Heart right ventricle (tissue), 16 donors: ENCODE measurements at regions of chr5 and their contacts with region 1.

Region 1: GRCh38 chr5:135977375-135977928 is 22.7 kb upstream of the LECT2 start:
- DNase-seq: peak; percentile 56 to 79
- ATAC-seq: peak; percentile 70 to 89 (median 79)
- H3K4me3 ChIP-seq: no peak overlapping the region
- H3K27ac ChIP-seq: peak overlapping the region in 4 of 10 donors; percentile 36 to 77 (median 56)
- H3K4me1 ChIP-seq: peaks cover 0 to 45% (median 30%) of the 10 kb centered on the region in 9 donors
- H3K27me3 ChIP-seq: peaks cover 0 to 18% (median 0%) of the 10 kb centered on the region in 7 donors
- CTCF ChIP-seq: peak; percentile 23 to 77 (median 60)

Region 2: DNA sequence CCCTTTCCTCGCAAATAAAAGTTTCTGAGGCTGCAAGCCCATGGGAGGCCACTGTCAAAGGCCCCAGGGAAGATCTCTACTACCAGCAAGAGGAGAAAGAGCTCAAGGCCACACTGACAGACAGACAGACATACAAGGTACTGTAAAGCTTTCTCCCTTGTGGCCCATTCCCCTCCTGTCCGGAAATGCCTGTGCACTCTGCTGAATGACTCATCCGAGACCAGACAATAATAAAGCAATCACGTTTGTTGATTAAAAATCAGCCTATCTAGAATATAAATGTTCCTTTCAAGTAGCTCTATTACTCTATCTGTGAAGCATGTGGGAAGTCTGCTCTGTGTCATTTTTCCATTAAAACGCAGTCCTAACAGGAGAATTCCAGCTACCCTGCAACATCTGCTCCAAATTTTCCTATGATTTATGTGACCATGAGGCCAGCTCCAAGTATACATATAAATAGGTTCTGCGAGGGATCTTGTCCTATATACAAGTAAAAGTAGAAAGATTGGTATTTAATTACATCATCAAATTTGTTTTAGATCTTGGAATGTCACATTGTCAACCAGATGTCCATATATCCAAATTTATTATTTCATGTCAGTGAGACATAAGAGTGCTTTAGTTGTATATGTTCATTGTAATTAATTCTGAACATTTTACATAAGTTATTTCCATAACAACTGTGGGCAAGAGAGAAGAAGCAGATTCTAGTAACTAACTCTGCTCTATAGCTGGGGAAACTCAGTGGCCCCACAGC is 16.6 kb after region 1 on chr5:
- intact Hi-C with region 1: loop called in 1 of 10 experiments (anchors 1 kb)
- DNase-seq: no peak
- ATAC-seq: peak in 6 of 8 donors; percentile 27 to 55 (median 45)
- H3K4me3 ChIP-seq: no peak overlapping the region
- H3K27ac ChIP-seq: peak overlapping the region in 8 of 10 donors; percentile 1 to 85 (median 39)
- H3K4me1 ChIP-seq: peaks cover 0 to 52% (median 11%) of the 10 kb centered on the region in 9 donors
- H3K27me3 ChIP-seq: no peaks in the 10 kb centered on the region
- CTCF ChIP-seq: no peak

Region 3: DNA sequence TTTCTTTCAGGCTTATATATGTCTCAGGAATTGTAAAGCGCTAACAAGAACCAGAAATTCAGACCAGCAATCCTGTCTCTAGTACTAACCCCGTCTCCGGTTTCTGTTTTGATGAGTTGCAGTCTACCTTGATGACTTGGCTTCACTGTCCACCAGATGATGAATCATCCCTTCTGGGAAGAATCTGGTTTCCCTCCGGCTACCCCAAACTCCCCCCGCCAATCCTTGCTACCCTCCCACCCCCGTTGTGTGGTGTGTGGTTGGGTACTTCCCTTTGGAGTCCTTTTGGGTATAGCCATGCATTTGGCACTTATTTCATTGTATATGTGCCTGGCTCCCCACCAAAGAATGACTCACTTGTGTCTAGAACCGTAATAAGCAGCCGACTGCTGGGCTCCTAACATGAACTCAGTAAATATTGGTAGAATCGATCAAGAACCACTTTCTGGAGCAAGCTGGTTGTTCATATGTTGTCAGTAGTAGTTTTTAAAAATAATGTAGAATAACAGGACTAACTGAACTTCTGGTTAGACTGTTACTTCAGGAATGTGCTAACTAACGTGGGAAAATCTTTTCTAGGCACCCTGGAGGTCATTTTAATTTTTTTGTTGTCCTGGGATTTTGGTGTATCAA is 43.0 kb after region 1 on chr5:
- intact Hi-C with region 1: loop called in 2 of 10 experiments (anchors 5 to 10 kb)
- DNase-seq: no peak
- ATAC-seq: peak in 6 of 8 donors; percentile 7 to 51 (median 21)
- H3K4me3 ChIP-seq: no peak overlapping the region
- H3K27ac ChIP-seq: peak overlapping the region in 9 of 10 donors; percentile 10 to 88 (median 67)
- H3K4me1 ChIP-seq: peaks cover 5 to 90% (median 41%) of the 10 kb centered on the region in 9 donors
- H3K27me3 ChIP-seq: no peaks in the 10 kb centered on the region
- CTCF ChIP-seq: no peak

Region 4: GRCh38 chr5:136028782-136029742 is 51.6 kb after region 1 on chr5 and contains the start of gene TGFBI:
- intact Hi-C with region 1: loop called in 3 of 10 experiments (anchors 5 to 10 kb)
- DNase-seq: peak; percentile 78 to 83
- ATAC-seq: peak; percentile 84 to 94 (median 90)
- H3K4me3 ChIP-seq: peak within 1 kb of the TSS; percentile 14 to 81 (median 72)
- H3K27ac ChIP-seq: peak within 1 kb of the TSS; percentile 23 to 93 (median 81)
- H3K4me1 ChIP-seq: peaks cover 6 to 90% (median 68%) of the 10 kb centered on the region in 9 donors
- H3K27me3 ChIP-seq: peaks cover 0 to 9% (median 0%) of the 10 kb centered on the region in 7 donors
- CTCF ChIP-seq: peak in 6 of 9 donors; percentile 14 to 42 (median 24)
- total RNA-seq, gene TGFBI: 29.6 to 137 (median 46.2) TPM

Region 5: DNA sequence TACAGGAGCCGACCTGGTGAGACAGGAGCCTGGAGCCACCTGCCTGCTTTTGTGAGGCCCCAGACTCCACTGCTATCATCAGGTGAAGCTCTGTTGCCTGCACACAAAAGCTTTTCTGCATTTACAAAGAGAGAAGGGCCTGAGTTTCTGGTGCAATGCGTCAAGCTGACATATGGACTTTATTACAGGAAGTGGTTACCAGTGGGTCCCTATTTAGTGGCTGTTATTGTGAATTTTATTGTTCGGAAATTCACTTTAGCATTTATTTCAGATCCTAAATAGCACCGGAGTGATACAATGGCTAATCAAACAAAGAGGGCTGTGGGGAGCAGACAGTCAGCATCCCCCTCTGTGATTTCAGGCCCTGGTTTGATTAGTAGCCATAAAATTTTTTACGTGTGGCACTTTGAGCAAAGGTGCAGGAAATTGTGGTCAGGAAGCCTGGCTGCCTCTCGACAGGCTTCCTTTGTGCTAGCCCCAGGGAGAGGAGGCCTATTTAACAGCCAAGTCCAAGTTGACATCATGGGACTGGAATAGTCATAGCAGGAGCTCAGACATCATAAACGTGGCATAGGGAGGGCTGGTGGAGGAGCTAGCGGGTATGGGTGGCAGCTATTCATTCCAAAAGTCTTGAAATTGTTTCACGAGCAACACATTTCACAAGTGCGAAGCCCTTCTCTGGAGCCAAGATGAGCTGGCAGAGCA is 59.7 kb after region 1 on chr5:
- intact Hi-C with region 1: loop called in 1 of 10 experiments (anchors 10 kb)
- DNase-seq: peak in 1 of 2 donors; percentile 65
- ATAC-seq: peak; percentile 75 to 95 (median 88)
- H3K4me3 ChIP-seq: no peak overlapping the region
- H3K27ac ChIP-seq: peak overlapping the region in 9 of 10 donors; percentile 53 to 84 (median 70)
- H3K4me1 ChIP-seq: peaks cover 10 to 90% (median 56%) of the 10 kb centered on the region in 9 donors
- H3K27me3 ChIP-seq: no peaks in the 10 kb centered on the region
- CTCF ChIP-seq: no peak